Ascending aorta (tissue), 2 donors: ENCODE measurements at regions of chr12 and their contacts with region 1.

Region 1: GRCh38 chr12:52582971-52583456 is 9.4 kb upstream of the KRT74 start:
- DNase-seq: no peak
- H3K4me3 ChIP-seq: no peak overlapping the region
- H3K27ac ChIP-seq: no peak overlapping the region
- H3K4me1 ChIP-seq: no peaks in the 10 kb centered on the region
- H3K27me3 ChIP-seq: no peaks in the 10 kb centered on the region
- CTCF ChIP-seq: peak; percentile 25 to 50 (median 48)

Region 2: GRCh38 chr12:52645120-52645761 is 62.2 kb after region 1 on chr12:
- intact Hi-C with region 1: no loop called
- DNase-seq: no peak
- H3K4me3 ChIP-seq: no peak overlapping the region
- H3K27ac ChIP-seq: no peak overlapping the region
- H3K4me1 ChIP-seq: no peaks in the 10 kb centered on the region
- H3K27me3 ChIP-seq: no peaks in the 10 kb centered on the region
- CTCF ChIP-seq: no peak

Region 3: GRCh38 chr12:52879394-52880351 is 296.7 kb after region 1 on chr12:
- intact Hi-C with region 1: loop called (anchors 2 kb)
- DNase-seq: peak in 1 of 2 donors; percentile 85
- H3K4me3 ChIP-seq: peak overlapping the region in 1 of 2 donors; percentile 52
- H3K27ac ChIP-seq: no peak overlapping the region
- H3K4me1 ChIP-seq: peaks cover 0 to under 1% of the 10 kb centered on the region in 2 donors
- H3K27me3 ChIP-seq: no peaks in the 10 kb centered on the region
- CTCF ChIP-seq: peak; percentile 53 to 81 (median 60)

Region 4: DNA sequence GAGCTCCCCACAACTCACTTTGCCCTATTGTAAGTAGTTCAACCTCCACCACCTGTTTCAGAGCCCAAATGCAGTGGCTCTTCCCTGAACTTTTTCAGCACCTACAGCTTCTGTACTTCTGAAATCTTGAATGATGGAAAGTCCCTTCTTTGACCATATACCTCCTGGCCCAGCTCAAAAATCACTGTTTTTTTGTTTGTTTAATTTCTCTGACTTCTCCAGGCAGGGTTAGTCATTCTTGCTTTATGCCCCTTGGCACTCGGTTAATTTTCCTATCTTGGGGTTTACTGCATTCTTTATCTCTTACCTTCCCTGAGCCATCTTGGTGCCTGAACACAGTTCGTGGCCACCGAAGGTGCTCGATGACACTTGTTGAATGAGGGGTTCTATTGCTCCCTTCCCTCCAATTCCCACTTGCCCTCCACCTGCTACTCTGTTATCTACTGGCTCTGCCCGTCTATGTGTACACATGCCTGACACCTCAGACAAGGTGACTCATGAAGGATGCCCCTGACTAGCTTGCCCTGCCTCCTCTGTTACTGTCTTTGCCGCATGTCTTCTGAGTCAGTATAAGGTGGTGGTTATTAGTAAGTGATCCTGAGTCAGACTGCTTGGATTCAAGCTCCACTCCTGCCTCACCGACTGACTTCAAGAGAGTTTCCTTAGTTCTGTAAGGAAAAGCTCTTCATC is 845.0 kb after region 1 on chr12:
- intact Hi-C with region 1: no loop called
- DNase-seq: no peak
- H3K4me3 ChIP-seq: no peak overlapping the region
- H3K27ac ChIP-seq: no peak overlapping the region
- H3K4me1 ChIP-seq: no peaks in the 10 kb centered on the region
- H3K27me3 ChIP-seq: no peaks in the 10 kb centered on the region
- CTCF ChIP-seq: no peak